Activated CD4-positive, alpha-beta memory T cell treated with anti-CD3 and anti-CD28 coated beads for 36 hours (primary cell): ENCODE measurements at regions of chr12 and their contacts with region 1.

Region 1: GRCh38 chr12:107685360-107686248 is at the start of gene PWP1:
- DNase-seq: peak; percentile 96
- H3K4me3 Mint-ChIP-seq: peak within 1 kb of the TSS; percentile 92
- H3K27ac Mint-ChIP-seq: peak within 1 kb of the TSS; percentile 98
- H3K4me1 Mint-ChIP-seq: peaks cover 25% of the 10 kb centered on the region
- H3K27me3 Mint-ChIP-seq: peaks cover 1% of the 10 kb centered on the region
- total RNA-seq, gene PWP1: 44.0 to 47.0 TPM

Region 2: GRCh38 chr12:106302401-106303201 is 1383.0 kb before region 1 on chr12 and contains the start of gene TCP11L2:
- CTCF ChIA-PET with region 1: no interaction called
- POLR2A ChIA-PET with region 1: no interaction called
- intact Hi-C with region 1: loop called (anchors 10 kb)
- DNase-seq: peak; percentile 91
- H3K4me3 Mint-ChIP-seq: peak within 1 kb of the TSS; percentile 89
- H3K27ac Mint-ChIP-seq: peak within 1 kb of the TSS; percentile 99
- H3K4me1 Mint-ChIP-seq: peaks cover 52% of the 10 kb centered on the region
- H3K27me3 Mint-ChIP-seq: no peaks in the 10 kb centered on the region
- total RNA-seq, gene TCP11L2: 8.8 to 10.3 TPM

Region 3: GRCh38 chr12:107670999-107671643 is 14.5 kb before region 1 on chr12:
- CTCF ChIA-PET with region 1: interaction called, 25 read pairs
- POLR2A ChIA-PET with region 1: no interaction called
- intact Hi-C with region 1: no loop called
- DNase-seq: peak; percentile 66
- H3K4me3 Mint-ChIP-seq: no peak overlapping the region
- H3K27ac Mint-ChIP-seq: no peak overlapping the region
- H3K4me1 Mint-ChIP-seq: no peaks in the 10 kb centered on the region
- H3K27me3 Mint-ChIP-seq: peaks cover 2% of the 10 kb centered on the region

Region 4: DNA sequence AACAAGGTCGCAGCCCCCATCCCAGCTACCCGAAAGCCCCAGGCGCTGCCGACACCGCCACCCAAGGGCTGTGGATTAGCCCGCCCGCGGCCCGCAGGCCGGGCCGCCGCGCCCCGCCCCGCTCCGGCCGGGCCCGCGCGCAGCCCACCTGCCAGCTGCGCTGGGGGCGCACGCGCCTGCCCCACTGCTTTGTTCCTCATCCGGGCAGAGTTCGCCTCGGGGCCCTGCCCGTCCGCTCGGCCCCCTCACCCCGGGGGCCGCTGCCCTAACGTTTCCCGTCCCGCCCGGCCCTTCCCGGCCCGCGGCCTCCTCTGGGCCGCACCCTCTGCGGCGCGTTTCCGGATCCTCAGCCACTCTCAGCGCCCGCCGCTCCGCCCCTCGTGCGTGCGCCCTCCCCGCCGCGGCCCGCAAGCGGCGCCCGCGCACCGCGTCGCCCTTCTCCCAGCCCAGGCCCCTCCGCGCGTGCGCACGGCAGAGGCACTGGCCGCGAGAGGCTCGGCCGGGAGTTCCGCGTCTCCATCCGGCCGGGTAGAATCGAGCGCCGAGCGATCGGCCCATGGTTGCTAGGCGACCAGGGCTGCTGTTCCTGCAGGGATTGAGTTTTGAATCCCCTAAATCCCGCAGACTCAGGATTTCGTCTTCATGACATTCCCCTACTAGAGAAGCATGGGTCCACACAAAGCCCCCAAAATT is 75.4 kb after region 1 on chr12 and contains the start of gene PRDM4:
- CTCF ChIA-PET with region 1: interaction called, 3 read pairs
- POLR2A ChIA-PET with region 1: interaction called, 3 read pairs
- intact Hi-C with region 1: loop called (anchors 1 kb)
- DNase-seq: peak; percentile 94
- H3K4me3 Mint-ChIP-seq: peak within 1 kb of the TSS; percentile 92
- H3K27ac Mint-ChIP-seq: peak within 1 kb of the TSS; percentile 88
- H3K4me1 Mint-ChIP-seq: peaks cover 27% of the 10 kb centered on the region
- H3K27me3 Mint-ChIP-seq: no peaks in the 10 kb centered on the region
- total RNA-seq, gene PRDM4: 33.4 to 39.0 TPM

Region 5: GRCh38 chr12:107903341-107904061 is 217.9 kb after region 1 on chr12:
- CTCF ChIA-PET with region 1: no interaction called
- POLR2A ChIA-PET with region 1: no interaction called
- intact Hi-C with region 1: loop called (anchors 5 kb)
- DNase-seq: peak; percentile 83
- H3K4me3 Mint-ChIP-seq: peak overlapping the region; percentile 75
- H3K27ac Mint-ChIP-seq: no peak overlapping the region
- H3K4me1 Mint-ChIP-seq: peaks cover 8% of the 10 kb centered on the region
- H3K27me3 Mint-ChIP-seq: peaks cover 39% of the 10 kb centered on the region